HCT116 (cell line): ENCODE measurements at regions of chr19 and their contacts with region 1.

Region 1: DNA sequence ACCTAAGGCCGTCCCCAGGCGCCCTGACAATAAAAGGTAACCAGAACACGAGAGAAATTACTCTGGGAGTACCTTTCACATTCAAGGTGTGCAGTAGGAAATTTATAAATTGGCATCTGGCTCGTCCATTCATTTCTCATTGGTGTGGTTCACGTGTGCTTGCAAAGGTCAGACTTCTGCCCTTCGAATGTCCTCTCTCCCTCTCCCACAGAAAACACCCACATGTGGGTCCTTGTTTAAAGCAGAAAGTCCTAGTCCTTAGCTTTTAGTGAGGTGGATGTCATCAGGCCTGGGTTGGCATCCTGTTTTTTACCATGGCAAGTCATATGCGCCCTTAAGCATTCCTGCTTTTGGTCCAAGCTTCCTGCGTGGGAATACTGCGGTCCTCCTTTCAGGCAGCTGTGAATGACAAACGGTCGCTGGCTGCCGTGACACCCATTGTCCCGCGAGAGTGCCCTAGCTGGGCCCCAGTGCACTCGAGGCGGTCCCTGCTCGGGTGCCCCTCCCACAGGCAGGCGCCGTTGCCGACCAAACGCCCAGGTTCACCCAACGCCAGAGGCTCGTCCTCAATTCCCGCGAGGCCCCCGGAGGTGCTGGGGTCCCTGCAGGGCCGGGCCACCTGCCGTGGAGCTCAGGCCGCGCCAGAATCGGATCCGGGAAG is at the start of gene NUDT19:
- DNase-seq: peak; percentile 75
- ATAC-seq: peak; percentile 96
- H3K4me3 ChIP-seq: peak within 1 kb of the TSS; percentile 69 to 79
- H3K27ac ChIP-seq: peak within 1 kb of the TSS; percentile 97
- H3K4me1 ChIP-seq: peaks cover 12 to 36% of the 10 kb centered on the region in 2 experiments
- H3K27me3 ChIP-seq: no peaks in the 10 kb centered on the region
- CTCF ChIP-seq: no peak
- POLR2A ChIP-seq: peak; percentile 84
- RAD21 ChIP-seq: no peak
- total RNA-seq, gene NUDT19: 22.1 TPM

Region 2: GRCh38 chr19:32611161-32611560 is 80.3 kb before region 1 on chr19:
- CTCF ChIA-PET with region 1: no interaction called
- POLR2A ChIA-PET with region 1: no interaction called
- RAD21 ChIA-PET with region 1: no interaction called
- intact Hi-C with region 1: no loop called
- DNase-seq: no peak
- ATAC-seq: no peak
- H3K4me3 ChIP-seq: no peak overlapping the region
- H3K27ac ChIP-seq: no peak overlapping the region
- H3K4me1 ChIP-seq: no peaks in the 10 kb centered on the region
- H3K27me3 ChIP-seq: no peaks in the 10 kb centered on the region
- CTCF ChIP-seq: no peak
- POLR2A ChIP-seq: no peak
- RAD21 ChIP-seq: no peak

Region 3: GRCh38 chr19:32719611-32720059 is 28.2 kb after region 1 on chr19 and contains the start of gene TDRD12:
- CTCF ChIA-PET with region 1: no interaction called
- POLR2A ChIA-PET with region 1: no interaction called
- RAD21 ChIA-PET with region 1: no interaction called
- intact Hi-C with region 1: no loop called
- DNase-seq: no peak
- ATAC-seq: peak; percentile 79
- H3K4me3 ChIP-seq: no peak within 1 kb of the TSS
- H3K27ac ChIP-seq: no peak within 1 kb of the TSS
- H3K4me1 ChIP-seq: no peaks in the 10 kb centered on the region
- H3K27me3 ChIP-seq: no peaks in the 10 kb centered on the region
- CTCF ChIP-seq: peak in 2 of 3 experiments; percentile 34 to 52; a peak in 3 of 6 replicates
- POLR2A ChIP-seq: no peak
- RAD21 ChIP-seq: no peak
- total RNA-seq, gene TDRD12: 0.30 TPM

Region 4: DNA sequence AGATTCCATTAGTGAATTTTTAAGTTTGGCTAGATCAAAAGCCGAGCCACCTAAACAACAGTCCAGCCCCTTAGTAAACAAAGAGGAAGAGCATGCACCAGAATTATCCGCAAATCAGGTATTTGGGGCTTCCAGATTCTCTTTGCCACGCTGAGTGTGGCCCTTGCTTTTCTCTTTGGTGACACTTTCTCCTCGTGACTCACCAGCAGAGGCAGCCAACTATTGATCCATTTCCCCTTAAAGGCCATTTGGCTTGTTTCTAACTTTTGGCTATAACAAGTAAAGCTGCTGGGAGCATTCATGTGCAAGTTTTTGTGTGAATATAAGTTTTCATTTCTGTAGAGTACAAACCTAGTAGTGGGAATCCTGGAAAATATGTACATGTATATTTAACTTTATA is 422.9 kb after region 1 on chr19:
- CTCF ChIA-PET with region 1: interaction called, 3 read pairs
- POLR2A ChIA-PET with region 1: no interaction called
- RAD21 ChIA-PET with region 1: no interaction called
- intact Hi-C with region 1: loop called (anchors 5 kb)
- DNase-seq: peak; percentile 13
- ATAC-seq: no peak
- H3K4me3 ChIP-seq: no peak overlapping the region
- H3K27ac ChIP-seq: no peak overlapping the region
- H3K4me1 ChIP-seq: peaks cover 4 to 9% of the 10 kb centered on the region in 2 experiments; a peak in 3 of 4 replicates
- H3K27me3 ChIP-seq: no peaks in the 10 kb centered on the region
- CTCF ChIP-seq: no peak
- POLR2A ChIP-seq: no peak
- RAD21 ChIP-seq: no peak